ENCODE measurements at regions of chr21 and their contacts with region 1.

Region 1: GRCh38 chr21:38985568-38986378 is 180.0 kb downstream of the ETS2 start:
- DNase-seq: peak; percentile 72
- ATAC-seq: peak; percentile 54 to 63

Region 2: DNA sequence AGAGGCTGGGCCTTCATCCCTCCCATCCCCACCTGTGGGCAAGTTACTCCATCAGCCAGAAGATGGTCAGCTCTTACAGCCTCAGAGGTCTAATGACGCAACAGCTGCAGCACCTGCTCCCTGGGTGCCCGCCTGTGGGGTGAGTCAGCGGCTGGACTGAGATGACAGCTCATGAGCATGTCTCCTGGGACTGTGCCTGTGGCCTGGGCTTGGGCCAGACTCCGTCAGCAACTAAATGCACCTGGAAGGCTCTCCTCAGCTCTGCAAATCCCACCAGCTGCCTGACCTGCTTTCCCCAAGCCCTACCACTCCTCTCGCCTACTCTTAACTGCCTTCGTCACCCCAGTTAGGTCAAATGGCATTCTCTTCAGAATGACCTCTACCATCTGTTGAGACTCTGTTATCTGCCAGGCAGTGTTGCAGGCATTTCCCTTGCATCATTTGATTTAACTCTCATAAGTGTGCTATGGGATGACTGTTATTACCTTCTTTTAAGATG is 132.3 kb before region 1 on chr21:
- intact Hi-C with region 1: no loop called
- DNase-seq: no peak
- ATAC-seq: peak; percentile 41 to 75

Region 3: DNA sequence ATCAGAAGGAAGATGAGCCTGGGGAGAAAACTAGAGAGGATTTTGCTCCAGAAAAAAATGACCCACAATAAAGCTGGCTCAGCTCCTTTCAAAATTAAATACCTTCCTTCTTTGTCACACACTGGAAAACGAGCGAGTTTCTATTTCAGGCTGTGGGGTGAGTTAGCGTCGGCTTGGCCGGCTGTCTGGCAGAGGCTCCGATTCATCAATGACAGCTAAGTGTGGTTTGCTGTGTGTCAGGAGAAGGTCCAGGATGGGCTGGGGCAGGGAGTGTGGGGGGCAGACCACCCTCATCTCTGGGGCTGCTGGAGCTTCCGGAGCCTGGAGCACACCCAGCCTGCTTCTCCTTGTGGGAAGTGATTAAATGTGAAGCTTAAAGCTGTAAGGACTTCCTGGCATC is 59.9 kb before region 1 on chr21:
- intact Hi-C with region 1: loop called in 1 of 2 experiments (anchors 5 kb)
- DNase-seq: peak; percentile 71
- ATAC-seq: peak; percentile 92 to 93

Measured in left cardiac atrium (tissue), 4 donors.